Activated naive CD4-positive, alpha-beta T cell treated with anti-CD3 and anti-CD28 coated beads for 36 hours (primary cell): ENCODE measurements at regions of chr4 and their contacts with region 1.

Region 1: GRCh38 chr4:48985976-48986653 is at the start of gene CWH43:
- DNase-seq: no peak
- H3K4me3 Mint-ChIP-seq: no peak within 1 kb of the TSS
- H3K27ac Mint-ChIP-seq: no peak within 1 kb of the TSS
- H3K4me1 Mint-ChIP-seq: no peaks in the 10 kb centered on the region
- H3K27me3 Mint-ChIP-seq: peaks cover 56% of the 10 kb centered on the region
- total RNA-seq, gene CWH43: not detected

Region 2: GRCh38 chr4:48939785-48940184 is 46.3 kb before region 1 on chr4:
- CTCF ChIA-PET with region 1: interaction called, 3 read pairs
- intact Hi-C with region 1: loop called (anchors 10 kb)
- DNase-seq: no peak
- H3K4me3 Mint-ChIP-seq: no peak overlapping the region
- H3K27ac Mint-ChIP-seq: no peak overlapping the region
- H3K4me1 Mint-ChIP-seq: peaks cover 8% of the 10 kb centered on the region
- H3K27me3 Mint-ChIP-seq: no peaks in the 10 kb centered on the region